ENCODE measurements at regions of chr16 and their contacts with region 1.

Region 1: GRCh38 chr16:67017810-67018488 is 11.0 kb upstream of the CBFB start:
- DNase-seq: peak; percentile 99
- ATAC-seq: peak; percentile 93
- H3K4me3 ChIP-seq: no peak overlapping the region
- H3K27ac ChIP-seq: no peak overlapping the region
- H3K4me1 ChIP-seq: peaks cover 50% of the 10 kb centered on the region
- H3K27me3 ChIP-seq: peaks cover 9 to 24% of the 10 kb centered on the region in 2 experiments
- CTCF ChIP-seq: peak; percentile 99
- EP300 ChIP-seq: no peak
- POLR2A ChIP-seq: no peak
- RAD21 ChIP-seq: peak; percentile 98

Region 2: DNA sequence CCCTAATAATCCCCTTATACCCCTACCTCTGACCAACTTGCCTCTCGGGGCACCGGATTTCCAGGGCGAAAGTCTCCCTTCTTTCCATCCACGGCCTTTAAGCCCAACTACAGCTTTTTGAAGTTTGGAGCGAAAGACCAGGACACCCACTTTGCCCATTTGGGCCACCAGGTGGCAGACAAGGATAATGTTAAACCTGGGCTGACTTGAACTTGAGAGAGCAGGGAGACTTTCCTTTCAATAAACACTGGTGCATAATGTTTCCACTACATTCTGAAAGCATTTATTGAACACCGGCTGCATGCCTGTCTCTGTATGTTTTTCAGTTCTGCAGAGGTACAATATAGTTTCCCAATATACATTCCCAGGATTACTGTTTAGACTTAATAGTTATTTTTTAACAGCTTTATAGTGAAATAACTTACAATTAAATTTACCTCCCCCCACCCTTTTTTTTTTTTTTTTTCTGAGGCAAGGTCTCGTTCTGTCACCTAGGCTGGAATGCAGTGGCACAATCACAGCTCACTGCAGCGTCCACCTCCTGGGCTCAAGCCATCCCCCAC is 63.8 kb before region 1 on chr16:
- CTCF ChIA-PET with region 1: interaction called, 5 read pairs
- POLR2A ChIA-PET with region 1: no interaction called
- in situ Hi-C with region 1: no loop called
- intact Hi-C with region 1: loop called (anchors 10 kb)
- DNase-seq: peak; percentile 85
- ATAC-seq: peak; percentile 86
- H3K4me3 ChIP-seq: peak overlapping the region in 2 of 3 experiments; percentile 25 to 40; a peak in 4 of 6 replicates
- H3K27ac ChIP-seq: no peak overlapping the region
- H3K4me1 ChIP-seq: peaks cover 73% of the 10 kb centered on the region
- H3K27me3 ChIP-seq: peaks cover 3 to 14% of the 10 kb centered on the region in 2 experiments; a peak in 4 of 5 replicates
- CTCF ChIP-seq: peak; percentile 96
- EP300 ChIP-seq: no peak
- POLR2A ChIP-seq: no peak
- RAD21 ChIP-seq: peak; percentile 79

Region 3: GRCh38 chr16:67028555-67029248 is 10.8 kb after region 1 on chr16 and contains the start of gene CBFB:
- CTCF ChIA-PET with region 1: no interaction called
- POLR2A ChIA-PET with region 1: interaction called, 12 read pairs
- in situ Hi-C with region 1: no loop called
- intact Hi-C with region 1: loop called (anchors 1 kb)
- DNase-seq: peak; percentile 90
- ATAC-seq: peak; percentile 89
- H3K4me3 ChIP-seq: peak within 1 kb of the TSS; percentile 96 to 99 (median 98)
- H3K27ac ChIP-seq: peak within 1 kb of the TSS; percentile 97
- H3K4me1 ChIP-seq: peaks cover 80% of the 10 kb centered on the region
- H3K27me3 ChIP-seq: no peaks in the 10 kb centered on the region; a peak in 1 of 5 replicates
- CTCF ChIP-seq: peak; percentile 47; the same call in 1 of the 2 replicates
- EP300 ChIP-seq: no peak
- POLR2A ChIP-seq: peak; percentile 95 to 99
- RAD21 ChIP-seq: peak; percentile 54; the same call in 1 of the 2 replicates
- total RNA-seq, gene CBFB: 70.8 and 76.0 TPM in 2 replicates

Region 4: GRCh38 chr16:67040906-67041305 is 23.0 kb after region 1 on chr16:
- CTCF ChIA-PET with region 1: no interaction called
- POLR2A ChIA-PET with region 1: no interaction called
- in situ Hi-C with region 1: no loop called
- intact Hi-C with region 1: no loop called
- DNase-seq: no peak
- ATAC-seq: no peak
- H3K4me3 ChIP-seq: no peak overlapping the region
- H3K27ac ChIP-seq: no peak overlapping the region
- H3K4me1 ChIP-seq: no peaks in the 10 kb centered on the region
- H3K27me3 ChIP-seq: no peaks in the 10 kb centered on the region
- CTCF ChIP-seq: no peak
- EP300 ChIP-seq: no peak
- POLR2A ChIP-seq: no peak
- RAD21 ChIP-seq: no peak

Region 5: DNA sequence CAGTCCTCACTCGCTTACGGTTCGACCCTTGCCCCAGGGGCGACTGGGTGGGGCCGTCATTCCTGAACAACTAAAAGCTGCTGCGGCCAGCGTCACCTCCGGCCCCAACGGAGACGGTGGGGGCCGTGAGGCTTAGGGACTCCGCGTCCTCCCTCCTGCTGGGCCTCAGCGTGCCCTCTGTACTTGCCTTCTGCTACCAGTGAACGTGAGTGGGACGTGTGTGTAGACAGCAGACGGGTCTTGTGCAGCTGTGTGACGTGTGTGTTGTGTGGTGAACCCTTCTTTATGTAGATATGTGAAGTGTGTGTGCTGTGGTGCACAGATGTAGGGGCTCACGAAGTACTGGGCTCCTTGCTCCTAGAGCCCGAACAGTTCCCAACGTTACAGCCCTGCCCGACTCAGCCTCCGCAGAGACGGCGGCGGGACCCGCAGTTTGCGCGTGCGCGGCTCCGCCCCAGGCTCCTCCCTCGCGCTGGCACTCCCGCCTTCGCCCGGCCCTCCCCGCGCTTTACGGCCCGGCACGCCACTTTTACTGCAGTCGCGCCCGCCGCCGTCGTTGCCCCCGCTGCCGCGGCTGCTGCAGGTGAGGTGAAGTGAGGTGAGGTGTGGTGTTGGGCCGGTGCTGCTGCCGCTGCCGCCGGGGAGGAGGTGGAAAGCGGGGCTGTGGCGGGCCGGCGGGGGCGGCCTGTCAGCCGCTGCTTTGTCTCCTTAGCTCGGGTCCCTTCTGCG is 91.6 kb after region 1 on chr16 and contains the start of gene PHAF1:
- CTCF ChIA-PET with region 1: interaction called, 3 read pairs
- POLR2A ChIA-PET with region 1: interaction called, 6 read pairs
- in situ Hi-C with region 1: no loop called
- intact Hi-C with region 1: loop called (anchors 2 kb)
- DNase-seq: peak; percentile 86
- ATAC-seq: peak; percentile 79
- H3K4me3 ChIP-seq: peak within 1 kb of the TSS; percentile 81 to 99 (median 83)
- H3K27ac ChIP-seq: peak within 1 kb of the TSS; percentile 90
- H3K4me1 ChIP-seq: peaks cover 48% of the 10 kb centered on the region
- H3K27me3 ChIP-seq: no peaks in the 10 kb centered on the region; a peak in 1 of 5 replicates
- CTCF ChIP-seq: peak; percentile 31; the same call in 1 of the 2 replicates
- EP300 ChIP-seq: peak in 1 of 2 experiments; percentile 17; a peak in 2 of 4 replicates
- POLR2A ChIP-seq: peak; percentile 98 to 99
- RAD21 ChIP-seq: peak; percentile 38
- total RNA-seq, gene PHAF1: 48.3 and 53.6 TPM in 2 replicates

Region 6: DNA sequence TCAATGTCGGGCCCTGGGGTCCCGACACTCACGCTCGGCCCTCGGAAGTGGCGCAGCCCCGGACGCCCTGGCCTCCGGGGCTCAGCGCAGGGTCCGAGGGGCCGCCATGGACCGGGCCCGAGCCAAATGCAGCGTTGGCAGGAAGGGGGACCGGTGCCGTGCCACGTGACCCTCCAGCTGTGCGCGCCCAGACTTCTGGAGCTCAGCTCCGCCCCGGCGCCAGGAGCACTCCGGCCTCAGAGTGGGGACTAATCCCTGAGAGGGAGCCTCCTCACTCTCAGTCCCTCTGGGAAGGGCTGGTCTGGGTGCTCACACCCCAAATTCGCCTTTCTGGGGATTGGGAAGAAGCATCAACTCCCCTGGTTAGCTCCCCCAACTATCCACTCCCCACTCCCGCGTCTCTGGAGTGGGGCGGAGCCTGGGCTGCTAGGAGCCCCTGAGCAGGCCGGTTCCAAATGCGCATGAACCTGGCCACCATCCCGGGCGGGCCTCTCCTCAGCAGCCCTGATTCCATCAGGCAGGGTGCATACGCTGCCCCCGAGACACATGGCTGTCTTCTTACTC is 133.0 kb after region 1 on chr16 and contains the start of gene B3GNT9:
- CTCF ChIA-PET with region 1: interaction called, 28 read pairs
- POLR2A ChIA-PET with region 1: interaction called, 11 read pairs
- in situ Hi-C with region 1: loop called (anchors 5 kb)
- intact Hi-C with region 1: loop called (anchors 1 kb)
- DNase-seq: peak; percentile 56
- ATAC-seq: peak; percentile 69
- H3K4me3 ChIP-seq: peak within 1 kb of the TSS; percentile 64 to 77 (median 73)
- H3K27ac ChIP-seq: peak within 1 kb of the TSS; percentile 1
- H3K4me1 ChIP-seq: peaks cover 21% of the 10 kb centered on the region
- H3K27me3 ChIP-seq: no peaks in the 10 kb centered on the region; a peak in 1 of 5 replicates
- CTCF ChIP-seq: peak; percentile 8; the same call in 1 of the 2 replicates
- EP300 ChIP-seq: peak in 1 of 2 experiments; percentile 33; a peak in 1 of 4 replicates
- POLR2A ChIP-seq: peak; percentile 39 to 51; a peak in 2 of 4 replicates
- RAD21 ChIP-seq: 0 out of 2 replicates have a peak, but pooled peaks have one; percentile 15
- total RNA-seq, gene B3GNT9: 1.5 and 3.1 TPM in 2 replicates

Region 7: DNA sequence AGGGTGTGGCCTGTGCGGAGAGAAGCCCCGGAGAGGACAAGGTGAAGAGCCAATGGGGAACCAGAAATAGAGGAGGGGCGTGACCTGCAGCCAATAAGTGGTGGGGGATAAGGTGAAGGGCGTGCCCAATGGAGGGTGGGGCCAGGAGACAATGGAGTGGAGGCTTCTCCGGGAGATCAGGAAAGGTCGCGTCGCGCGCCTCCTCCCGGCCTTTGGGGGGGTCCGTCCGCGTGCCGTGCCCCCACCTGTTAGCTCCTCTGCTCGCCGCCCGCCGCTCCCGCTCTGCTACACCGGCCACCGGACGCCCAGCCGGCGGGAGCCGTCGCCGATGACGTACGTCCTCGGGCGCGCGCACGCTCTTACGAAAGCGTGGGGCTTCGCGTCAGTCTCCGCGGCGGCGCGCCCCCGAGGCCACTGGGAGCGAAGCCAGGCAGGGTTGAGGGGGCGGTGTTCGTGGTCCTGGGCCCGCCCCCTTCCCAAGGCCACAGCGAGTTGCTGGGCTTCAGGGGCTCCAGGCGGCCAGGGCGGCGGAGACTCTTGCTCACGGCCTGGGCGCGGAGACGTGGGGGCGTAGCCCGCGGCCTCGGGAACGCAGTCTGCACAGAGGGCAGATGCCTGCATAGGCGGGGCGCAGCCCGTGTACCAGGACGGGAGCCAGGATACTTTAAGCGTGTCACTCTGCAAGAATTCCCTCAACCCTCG is 165.8 kb after region 1 on chr16 and contains the start of gene MATCAP1:
- CTCF ChIA-PET with region 1: interaction called, 12 read pairs
- POLR2A ChIA-PET with region 1: interaction called, 12 read pairs
- in situ Hi-C with region 1: no loop called
- intact Hi-C with region 1: loop called (anchors 1 kb)
- DNase-seq: peak; percentile 99
- ATAC-seq: peak; percentile 84
- H3K4me3 ChIP-seq: peak within 1 kb of the TSS; percentile 72 to 98 (median 82)
- H3K27ac ChIP-seq: peak within 1 kb of the TSS; percentile 82
- H3K4me1 ChIP-seq: peaks cover 48% of the 10 kb centered on the region
- H3K27me3 ChIP-seq: peaks cover 5 to 7% of the 10 kb centered on the region in 2 experiments; a peak in 2 of 5 replicates
- CTCF ChIP-seq: peak; percentile 45
- EP300 ChIP-seq: 0 out of 4 replicates have a peak, but pooled peaks of 1 of the 2 experiments have one; percentile 6
- POLR2A ChIP-seq: peak in 1 of 2 experiments; percentile 67; a peak in 2 of 4 replicates
- RAD21 ChIP-seq: no peak
- total RNA-seq, gene MATCAP1: 4.4 and 11.2 TPM in 2 replicates